CD4-positive, alpha-beta T cell (primary cell): ENCODE measurements at regions of chr7 and their contacts with region 1.

Region 1: DNA sequence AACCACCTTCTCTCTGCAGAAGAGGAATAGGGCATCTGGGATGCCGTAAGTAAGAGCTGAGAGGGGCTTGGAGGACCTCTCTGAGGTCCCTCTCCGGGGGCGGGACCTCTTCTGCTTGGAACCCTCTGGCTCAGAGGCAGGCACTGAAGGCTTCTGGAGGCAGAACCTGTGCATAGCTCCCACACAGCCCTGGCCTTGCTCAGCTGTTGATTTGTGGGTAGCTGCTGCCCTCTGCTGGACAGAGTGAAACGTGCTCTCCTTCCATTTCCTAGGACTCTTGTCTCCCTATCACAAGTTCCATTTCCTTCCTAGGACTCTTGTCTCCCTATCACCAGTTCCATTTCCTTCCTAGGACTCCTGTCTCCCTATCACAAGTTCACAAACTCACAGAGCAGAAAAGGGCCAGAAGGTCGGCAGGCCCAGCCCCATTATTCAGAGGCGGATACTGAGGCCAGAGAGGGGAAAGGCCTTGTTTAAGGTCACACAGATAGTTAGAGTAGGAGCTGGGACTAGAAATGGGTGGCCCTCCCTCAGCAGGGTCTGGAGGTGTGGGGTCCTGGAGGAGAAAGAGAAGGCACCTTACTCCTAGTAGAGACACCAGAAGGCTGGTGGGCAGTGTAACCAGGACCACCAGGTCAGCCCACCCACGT is 30.3 kb upstream of the GARS1 start:
- DNase-seq: peak; percentile 65 to 87 (median 71)
- ATAC-seq: peak; percentile 96
- H3K4me3 ChIP-seq: no peak overlapping the region
- H3K4me3 Mint-ChIP-seq: no peak overlapping the region
- H3K27ac ChIP-seq: no peak overlapping the region
- H3K27ac Mint-ChIP-seq: no peak overlapping the region
- H3K4me1 ChIP-seq: no peaks in the 10 kb centered on the region
- H3K4me1 Mint-ChIP-seq: no peaks in the 10 kb centered on the region
- H3K27me3 ChIP-seq: no peaks in the 10 kb centered on the region
- H3K27me3 Mint-ChIP-seq: no peaks in the 10 kb centered on the region
- CTCF ChIP-seq: peak; percentile 83

Region 2: DNA sequence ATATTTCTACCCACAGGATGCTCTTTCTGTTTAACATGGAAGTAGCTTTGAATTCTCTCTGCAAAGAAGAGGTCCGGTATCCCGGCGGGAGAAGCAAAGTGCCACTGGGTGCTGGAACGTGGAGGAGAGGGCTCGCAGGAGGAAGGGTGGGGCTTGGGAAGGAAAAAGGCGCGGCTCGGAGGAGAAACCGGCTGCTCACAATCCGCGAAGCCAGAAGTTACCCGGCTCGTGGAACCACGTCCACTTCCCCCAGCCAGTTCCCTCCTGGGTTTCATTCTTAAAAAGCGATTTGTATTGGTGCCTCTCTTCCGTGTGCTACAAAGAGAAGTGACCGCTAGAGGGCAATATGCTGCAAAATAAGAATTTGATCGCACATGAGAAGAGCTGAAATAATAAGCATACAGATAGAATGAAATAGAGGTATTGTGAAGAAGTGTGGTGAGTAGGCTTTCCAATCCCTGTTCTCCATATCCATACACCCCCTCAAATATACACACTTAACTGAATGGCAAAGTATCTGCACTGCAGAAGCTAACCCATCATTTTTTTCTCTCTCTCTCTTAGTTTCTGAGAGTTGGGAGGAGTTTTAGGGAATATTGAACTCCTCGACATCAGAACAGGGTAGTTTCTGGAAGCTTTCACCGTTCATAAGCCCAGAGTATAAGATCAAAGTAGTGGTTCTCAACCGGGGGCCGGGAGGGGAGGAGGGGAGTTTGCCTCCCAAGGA is 1637.3 kb before region 1 on chr7:
- CTCF ChIA-PET with region 1: interaction called, 3 read pairs
- POLR2A ChIA-PET with region 1: no interaction called
- intact Hi-C with region 1: loop called in 1 of 2 experiments (anchors 5 kb)
- DNase-seq: peak; percentile 3 to 79 (median 26)
- ATAC-seq: peak; percentile 91
- H3K4me3 ChIP-seq: peak overlapping the region; percentile 58
- H3K4me3 Mint-ChIP-seq: peak overlapping the region; percentile 91
- H3K27ac ChIP-seq: no peak overlapping the region
- H3K27ac Mint-ChIP-seq: no peak overlapping the region
- H3K4me1 ChIP-seq: peaks cover 7% of the 10 kb centered on the region
- H3K4me1 Mint-ChIP-seq: peaks cover 20% of the 10 kb centered on the region
- H3K27me3 ChIP-seq: no peaks in the 10 kb centered on the region
- H3K27me3 Mint-ChIP-seq: peaks cover 16% of the 10 kb centered on the region
- CTCF ChIP-seq: peak; percentile 78

Region 3: DNA sequence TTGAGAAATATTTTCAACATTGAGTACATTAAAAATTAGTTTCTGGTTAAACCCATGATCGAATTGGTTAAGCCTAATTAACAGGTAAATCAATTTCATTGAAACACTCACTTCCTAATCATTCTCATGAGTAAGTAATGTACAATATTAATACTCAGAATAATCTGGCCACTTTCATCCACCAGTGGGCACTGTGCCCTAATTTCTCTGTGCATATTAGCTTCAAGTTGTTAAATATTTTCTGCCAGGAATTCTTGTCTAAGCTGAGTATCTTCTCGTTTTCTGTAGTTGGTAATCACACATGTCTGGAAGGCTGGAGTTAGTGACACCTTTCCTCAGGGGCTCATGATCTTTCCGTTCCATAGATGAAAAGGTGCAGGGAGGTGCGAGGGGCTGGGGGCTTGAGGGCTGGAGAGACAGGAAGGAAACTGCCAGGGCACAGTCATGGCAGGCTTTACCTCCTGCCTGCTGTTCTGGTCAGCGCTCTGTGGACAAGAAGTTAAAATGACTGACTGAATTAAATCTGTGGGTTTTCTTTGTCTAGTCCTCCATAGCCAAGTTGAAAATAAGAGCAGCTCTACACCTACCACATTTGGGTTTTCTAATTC is 686.2 kb before region 1 on chr7:
- CTCF ChIA-PET with region 1: interaction called, 7 read pairs
- POLR2A ChIA-PET with region 1: no interaction called
- intact Hi-C with region 1: loop called in 1 of 2 experiments (anchors 5 kb)
- DNase-seq: peak in 8 of 14 experiments; percentile 10 to 54 (median 26)
- ATAC-seq: no peak
- H3K4me3 ChIP-seq: no peak overlapping the region
- H3K4me3 Mint-ChIP-seq: no peak overlapping the region
- H3K27ac ChIP-seq: no peak overlapping the region
- H3K27ac Mint-ChIP-seq: no peak overlapping the region
- H3K4me1 ChIP-seq: no peaks in the 10 kb centered on the region
- H3K4me1 Mint-ChIP-seq: peaks cover 11% of the 10 kb centered on the region
- H3K27me3 ChIP-seq: peaks cover 0 to 1% of the 10 kb centered on the region in 2 experiments
- H3K27me3 Mint-ChIP-seq: peaks cover 10% of the 10 kb centered on the region
- CTCF ChIP-seq: peak; percentile 51

Region 4: DNA sequence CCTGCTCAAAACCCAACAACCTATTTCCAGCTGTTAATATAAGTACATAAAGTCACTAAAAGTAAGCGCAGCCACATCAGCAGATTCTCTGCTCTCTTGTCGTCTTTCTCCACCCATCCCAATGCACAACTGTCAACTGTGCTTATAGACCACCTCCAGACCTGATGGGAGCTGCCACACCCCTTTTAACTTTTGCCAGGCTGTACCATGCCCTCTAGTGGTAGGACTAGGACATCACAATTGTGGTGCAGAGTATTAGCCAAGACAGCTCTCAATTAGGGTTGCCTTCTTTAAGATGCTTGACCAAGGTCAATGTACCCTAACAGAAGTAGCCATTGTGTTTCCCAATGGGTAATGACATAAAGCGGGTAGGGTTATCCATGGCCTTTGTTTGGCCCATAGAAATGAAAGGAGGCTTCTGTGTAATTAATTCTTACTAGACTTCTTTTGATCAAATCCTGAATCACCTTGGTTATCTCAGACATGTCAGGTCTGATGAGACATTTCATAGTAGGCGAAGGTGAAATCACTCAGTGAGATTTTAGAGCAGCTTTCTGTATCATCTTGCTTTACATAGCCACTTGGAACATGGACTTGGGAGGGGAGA is 642.9 kb before region 1 on chr7:
- CTCF ChIA-PET with region 1: interaction called, 4 read pairs
- POLR2A ChIA-PET with region 1: no interaction called
- intact Hi-C with region 1: loop called in 1 of 2 experiments (anchors 5 kb)
- DNase-seq: peak in 9 of 14 experiments; percentile 7 to 65 (median 25)
- ATAC-seq: peak; percentile 80
- H3K4me3 ChIP-seq: no peak overlapping the region
- H3K4me3 Mint-ChIP-seq: no peak overlapping the region
- H3K27ac ChIP-seq: no peak overlapping the region
- H3K27ac Mint-ChIP-seq: no peak overlapping the region
- H3K4me1 ChIP-seq: no peaks in the 10 kb centered on the region
- H3K4me1 Mint-ChIP-seq: no peaks in the 10 kb centered on the region
- H3K27me3 ChIP-seq: no peaks in the 10 kb centered on the region
- H3K27me3 Mint-ChIP-seq: no peaks in the 10 kb centered on the region
- CTCF ChIP-seq: peak; percentile 91

Region 5: DNA sequence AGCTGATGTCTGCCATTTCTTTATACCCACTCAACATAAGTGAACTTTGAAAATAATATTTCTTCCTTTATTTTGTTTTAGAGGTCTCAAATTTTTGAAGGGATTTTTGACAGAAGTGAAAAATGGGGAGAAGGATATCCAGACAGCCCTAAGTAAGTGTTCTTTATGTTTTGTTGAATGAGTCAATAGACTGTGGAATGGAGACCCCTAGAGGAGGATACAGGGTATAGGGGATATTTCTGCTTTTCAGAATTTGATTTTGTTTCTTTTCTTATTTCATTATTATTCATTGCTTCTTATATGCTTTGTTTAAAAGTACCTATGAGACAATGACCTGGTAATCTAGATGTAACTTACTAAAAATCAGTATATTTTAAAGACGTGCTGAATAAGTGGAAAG is 501.8 kb before region 1 on chr7:
- CTCF ChIA-PET with region 1: no interaction called
- POLR2A ChIA-PET with region 1: no interaction called
- intact Hi-C with region 1: loop called (anchors 1 to 10 kb)
- DNase-seq: peak in 3 of 14 experiments; percentile 29 to 44 (median 38)
- ATAC-seq: peak; percentile 61
- H3K4me3 ChIP-seq: no peak overlapping the region
- H3K4me3 Mint-ChIP-seq: no peak overlapping the region
- H3K27ac ChIP-seq: no peak overlapping the region
- H3K27ac Mint-ChIP-seq: no peak overlapping the region
- H3K4me1 ChIP-seq: no peaks in the 10 kb centered on the region
- H3K4me1 Mint-ChIP-seq: peaks cover 21% of the 10 kb centered on the region
- H3K27me3 ChIP-seq: no peaks in the 10 kb centered on the region
- H3K27me3 Mint-ChIP-seq: no peaks in the 10 kb centered on the region
- CTCF ChIP-seq: peak; percentile 65

Region 6: DNA sequence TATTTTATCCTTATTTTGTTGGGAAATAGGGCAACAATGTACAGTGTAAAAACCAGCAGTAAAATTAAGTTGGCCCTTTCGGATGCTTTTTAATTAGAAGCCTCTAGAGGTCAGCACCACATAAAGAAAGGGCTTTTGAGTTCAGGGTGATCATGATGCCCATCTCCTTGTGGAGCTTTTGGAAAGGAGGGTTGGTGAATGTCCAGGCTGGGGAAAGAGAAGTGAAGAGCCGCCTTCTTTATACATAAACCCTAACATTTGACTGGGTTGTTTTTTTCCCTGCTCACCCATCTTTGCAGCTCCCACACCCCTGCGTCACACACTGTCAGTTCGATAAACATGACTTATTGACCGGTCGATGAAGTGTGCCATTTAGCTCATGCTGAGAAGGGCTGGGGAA is 399.8 kb before region 1 on chr7:
- CTCF ChIA-PET with region 1: no interaction called
- POLR2A ChIA-PET with region 1: no interaction called
- intact Hi-C with region 1: loop called (anchors 2 to 5 kb)
- DNase-seq: peak in 3 of 14 experiments; percentile 43 to 51 (median 46)
- ATAC-seq: no peak
- H3K4me3 ChIP-seq: no peak overlapping the region
- H3K4me3 Mint-ChIP-seq: no peak overlapping the region
- H3K27ac ChIP-seq: no peak overlapping the region
- H3K27ac Mint-ChIP-seq: no peak overlapping the region
- H3K4me1 ChIP-seq: peaks cover 13% of the 10 kb centered on the region
- H3K4me1 Mint-ChIP-seq: peaks cover 36% of the 10 kb centered on the region
- H3K27me3 ChIP-seq: no peaks in the 10 kb centered on the region
- H3K27me3 Mint-ChIP-seq: no peaks in the 10 kb centered on the region
- CTCF ChIP-seq: peak; percentile 34

Region 7: DNA sequence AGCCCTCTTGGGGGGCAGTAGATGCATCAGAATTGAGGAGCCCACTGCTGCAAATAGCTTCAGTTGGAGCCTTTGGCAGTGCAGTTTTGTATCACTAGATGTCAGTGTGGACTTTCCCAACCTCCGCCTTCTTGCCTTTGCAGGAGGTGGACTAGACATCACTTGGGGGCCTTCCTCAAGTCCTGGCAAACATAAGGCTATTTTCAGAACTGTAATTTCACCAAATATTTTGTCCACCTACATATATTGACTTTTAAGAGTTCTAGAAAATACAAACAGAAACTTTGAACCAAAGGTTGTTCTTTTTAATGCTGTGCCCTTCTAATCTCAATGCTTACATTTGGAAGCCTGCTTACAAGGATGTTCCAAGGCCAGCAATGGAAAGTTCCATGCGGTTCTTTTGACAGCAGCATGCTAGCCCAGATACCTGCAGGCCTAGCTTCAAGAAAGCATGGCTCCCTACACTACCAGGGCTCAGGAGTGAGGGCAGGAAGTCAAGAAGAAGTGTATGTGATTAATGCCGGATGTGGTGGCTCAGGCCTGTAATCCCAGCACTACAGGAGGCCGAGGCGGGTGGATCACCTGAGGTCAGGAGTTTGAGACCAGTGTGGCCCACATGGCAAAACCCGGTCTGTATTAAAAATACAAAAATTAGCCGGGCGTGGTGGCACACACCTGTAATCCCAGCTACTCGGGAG is 288.0 kb before region 1 on chr7:
- CTCF ChIA-PET with region 1: interaction called, 9 read pairs
- POLR2A ChIA-PET with region 1: interaction called, 7 read pairs
- intact Hi-C with region 1: loop called in 1 of 2 experiments (anchors 1 kb)
- DNase-seq: peak; percentile 33 to 78 (median 40)
- ATAC-seq: peak; percentile 86
- H3K4me3 ChIP-seq: no peak overlapping the region
- H3K4me3 Mint-ChIP-seq: no peak overlapping the region
- H3K27ac ChIP-seq: no peak overlapping the region
- H3K27ac Mint-ChIP-seq: no peak overlapping the region
- H3K4me1 ChIP-seq: peaks cover 6% of the 10 kb centered on the region
- H3K4me1 Mint-ChIP-seq: no peaks in the 10 kb centered on the region
- H3K27me3 ChIP-seq: no peaks in the 10 kb centered on the region
- H3K27me3 Mint-ChIP-seq: no peaks in the 10 kb centered on the region
- CTCF ChIP-seq: peak; percentile 75